ENCODE measurements at regions of chr10 and their contacts with region 1.

Region 1: GRCh38 chr10:34370126-34370525 is 445.0 kb downstream of the PARD3 start:
- DNase-seq: no peak
- ATAC-seq: peak; percentile 31
- H3K4me3 ChIP-seq: no peak overlapping the region
- H3K27ac ChIP-seq: no peak overlapping the region
- H3K4me1 ChIP-seq: 0 out of 2 replicates have a peak, but pooled peaks cover 2% of the 10 kb centered on the region
- H3K27me3 ChIP-seq: no peaks in the 10 kb centered on the region
- CTCF ChIP-seq: no peak
- EP300 ChIP-seq: no peak
- POLR2A ChIP-seq: no peak
- RAD21 ChIP-seq: no peak

Region 2: DNA sequence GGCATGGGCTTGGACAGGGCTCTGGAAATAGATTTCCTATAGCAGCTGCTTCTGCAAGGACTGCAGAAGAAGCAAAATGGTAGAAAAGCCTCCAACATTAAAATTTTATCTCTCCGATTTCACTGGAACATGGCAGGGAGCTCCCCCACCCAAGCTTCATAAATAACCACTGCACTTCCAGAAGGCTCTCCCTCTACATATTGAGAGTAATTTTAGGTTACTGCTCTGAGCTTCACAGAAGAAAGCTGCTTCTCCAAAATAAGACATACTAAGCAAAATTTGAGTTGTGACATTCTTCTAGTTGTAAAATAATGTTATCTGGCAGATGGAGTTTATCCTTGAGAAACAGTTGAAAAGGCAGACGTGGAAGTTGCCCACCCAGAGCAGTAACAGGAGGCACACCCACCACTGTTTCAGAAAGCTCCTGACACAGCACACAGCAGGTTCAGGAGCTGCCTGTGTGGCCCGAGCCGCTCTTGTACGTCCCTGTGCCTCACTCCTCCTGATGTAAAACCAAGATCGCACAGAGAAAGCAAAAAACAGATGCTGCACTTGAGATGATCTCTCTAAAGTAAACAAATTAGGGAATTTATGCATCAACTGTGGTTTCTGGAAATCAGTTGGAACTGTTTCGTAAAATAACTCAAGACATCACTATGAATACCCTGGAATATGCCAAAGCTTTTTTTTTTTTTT is 176.0 kb before region 1 on chr10:
- CTCF ChIA-PET with region 1: no interaction called
- POLR2A ChIA-PET with region 1: no interaction called
- RAD21 ChIA-PET with region 1: no interaction called
- SMC1A ChIA-PET with region 1: no interaction called
- in situ Hi-C with region 1: no loop called
- intact Hi-C with region 1: no loop called
- DNase-seq: no peak
- ATAC-seq: no peak
- H3K4me3 ChIP-seq: no peak overlapping the region
- H3K27ac ChIP-seq: no peak overlapping the region
- H3K4me1 ChIP-seq: no peaks in the 10 kb centered on the region
- H3K27me3 ChIP-seq: no peaks in the 10 kb centered on the region
- CTCF ChIP-seq: no peak
- EP300 ChIP-seq: no peak
- POLR2A ChIP-seq: no peak
- RAD21 ChIP-seq: no peak

Region 3: GRCh38 chr10:34384372-34384771 is 14.2 kb after region 1 on chr10:
- CTCF ChIA-PET with region 1: interaction called, 4 read pairs
- POLR2A ChIA-PET with region 1: interaction called, 4 read pairs
- RAD21 ChIA-PET with region 1: interaction called, 10 read pairs
- SMC1A ChIA-PET with region 1: interaction called, 9 read pairs
- in situ Hi-C with region 1: no loop called
- intact Hi-C with region 1: no loop called
- DNase-seq: no peak
- ATAC-seq: no peak
- H3K4me3 ChIP-seq: no peak overlapping the region
- H3K27ac ChIP-seq: no peak overlapping the region
- H3K4me1 ChIP-seq: no peaks in the 10 kb centered on the region
- H3K27me3 ChIP-seq: no peaks in the 10 kb centered on the region
- CTCF ChIP-seq: no peak
- EP300 ChIP-seq: no peak
- POLR2A ChIP-seq: no peak
- RAD21 ChIP-seq: no peak

Region 4: GRCh38 chr10:34615770-34616169 is 245.6 kb after region 1 on chr10:
- CTCF ChIA-PET with region 1: no interaction called
- POLR2A ChIA-PET with region 1: no interaction called
- RAD21 ChIA-PET with region 1: no interaction called
- SMC1A ChIA-PET with region 1: no interaction called
- in situ Hi-C with region 1: no loop called
- intact Hi-C with region 1: no loop called
- DNase-seq: no peak
- ATAC-seq: peak; percentile 84
- H3K4me3 ChIP-seq: no peak overlapping the region
- H3K27ac ChIP-seq: no peak overlapping the region
- H3K4me1 ChIP-seq: no peaks in the 10 kb centered on the region
- H3K27me3 ChIP-seq: no peaks in the 10 kb centered on the region
- CTCF ChIP-seq: no peak
- EP300 ChIP-seq: 0 out of 4 replicates have a peak, but pooled peaks of 1 of the 2 experiments have one; percentile 20
- POLR2A ChIP-seq: no peak
- RAD21 ChIP-seq: no peak

Measured in GM12878 (cell line).